Heart left ventricle (tissue), 16 donors: ENCODE measurements at regions of chr7 and their contacts with region 1.

Region 1: GRCh38 chr7:80593869-80594582 is 44.4 kb upstream of the CD36 start:
- DNase-seq: peak in 3 of 5 donors; percentile 48 to 69 (median 54)
- ATAC-seq: peak; percentile 66 to 88 (median 80)
- H3K4me3 ChIP-seq: peak overlapping the region in 1 of 12 donors; percentile 47
- H3K27ac ChIP-seq: peak overlapping the region; percentile 48 to 83 (median 69)
- H3K4me1 ChIP-seq: peaks cover 8 to 68% (median 32%) of the 10 kb centered on the region in 12 donors
- H3K27me3 ChIP-seq: no peaks in the 10 kb centered on the region
- CTCF ChIP-seq: no peak
- POLR2A ChIP-seq: peak in 1 of 2 donors; percentile 10

Region 2: DNA sequence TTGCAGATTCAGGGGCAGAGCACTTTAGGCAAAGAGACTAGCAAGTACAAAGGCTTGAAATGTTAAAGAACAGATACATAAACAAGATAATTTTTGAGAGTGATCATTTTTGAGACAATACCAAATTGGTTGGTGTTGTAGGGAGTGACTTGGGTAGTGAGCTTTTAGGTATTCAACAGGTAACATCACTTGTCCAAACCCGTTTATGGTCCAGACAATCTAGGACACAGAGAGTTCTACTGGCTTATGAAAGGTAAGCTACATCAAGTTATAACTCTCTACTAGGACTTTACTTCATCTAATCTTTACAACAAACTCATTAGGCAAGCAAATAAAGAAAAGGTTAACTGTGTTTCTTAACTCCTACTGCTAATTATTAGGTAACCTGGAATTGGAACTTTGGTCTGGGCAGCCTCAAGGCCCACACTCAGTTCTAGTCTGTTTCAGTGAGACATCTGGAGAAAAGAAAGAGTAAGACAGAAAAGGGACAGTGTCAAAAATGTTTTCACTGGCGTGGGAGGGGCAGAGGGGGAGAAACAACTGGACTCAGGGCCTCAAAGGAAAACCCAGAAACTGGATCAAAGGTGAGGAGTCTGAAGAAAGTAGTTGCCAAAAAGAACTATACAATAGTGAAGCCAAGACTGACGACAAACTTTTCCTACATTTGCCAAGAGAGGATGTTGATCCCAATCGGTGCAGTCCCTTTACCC is 121.4 kb before region 1 on chr7:
- intact Hi-C with region 1: loop called in 1 of 10 experiments (anchors 5 kb)
- DNase-seq: peak in 1 of 5 donors; percentile 13
- ATAC-seq: peak in 3 of 4 donors; percentile 40 to 57 (median 41)
- H3K4me3 ChIP-seq: no peak overlapping the region
- H3K27ac ChIP-seq: peak overlapping the region in 7 of 12 donors; percentile 2 to 56 (median 38)
- H3K4me1 ChIP-seq: peaks cover 4 to 36% (median 22%) of the 10 kb centered on the region in 12 donors
- H3K27me3 ChIP-seq: no peaks in the 10 kb centered on the region
- CTCF ChIP-seq: no peak
- POLR2A ChIP-seq: no peak

Region 3: DNA sequence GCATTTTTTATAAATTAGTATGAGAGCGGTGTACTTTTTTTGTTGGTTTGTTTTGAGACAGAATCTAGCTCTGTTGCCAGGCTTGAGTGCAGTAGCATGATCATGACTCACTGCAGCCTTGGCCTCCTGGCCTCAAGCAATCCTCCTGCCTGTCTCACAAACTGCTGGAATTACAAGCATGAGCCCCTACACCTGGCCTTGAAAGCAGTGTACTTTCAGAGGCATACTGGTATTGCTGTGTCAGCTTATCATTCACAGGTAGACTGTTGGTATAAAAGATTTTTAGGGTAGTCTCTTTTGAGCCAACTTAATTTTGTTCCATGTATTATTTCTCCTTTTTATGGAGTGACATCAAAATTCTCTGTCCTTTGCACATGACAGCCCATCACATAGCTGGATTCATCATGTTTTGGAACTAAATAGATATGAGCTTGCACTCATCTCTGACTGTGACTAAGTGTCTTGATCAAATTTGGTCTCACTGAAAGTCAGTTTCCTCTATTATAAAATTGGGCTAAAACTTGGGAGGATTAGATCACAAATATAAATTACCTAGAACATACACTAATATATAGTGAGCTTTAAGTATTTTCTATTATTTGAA is 94.6 kb before region 1 on chr7:
- intact Hi-C with region 1: loop called in 1 of 10 experiments (anchors 5 kb)
- DNase-seq: peak in 4 of 5 donors; percentile 36 to 72 (median 40)
- ATAC-seq: peak; percentile 80 to 93 (median 84)
- H3K4me3 ChIP-seq: no peak overlapping the region
- H3K27ac ChIP-seq: peak overlapping the region; percentile 18 to 83 (median 70)
- H3K4me1 ChIP-seq: peaks cover 3 to 42% (median 26%) of the 10 kb centered on the region in 12 donors
- H3K27me3 ChIP-seq: no peaks in the 10 kb centered on the region
- CTCF ChIP-seq: no peak
- POLR2A ChIP-seq: no peak

Region 4: DNA sequence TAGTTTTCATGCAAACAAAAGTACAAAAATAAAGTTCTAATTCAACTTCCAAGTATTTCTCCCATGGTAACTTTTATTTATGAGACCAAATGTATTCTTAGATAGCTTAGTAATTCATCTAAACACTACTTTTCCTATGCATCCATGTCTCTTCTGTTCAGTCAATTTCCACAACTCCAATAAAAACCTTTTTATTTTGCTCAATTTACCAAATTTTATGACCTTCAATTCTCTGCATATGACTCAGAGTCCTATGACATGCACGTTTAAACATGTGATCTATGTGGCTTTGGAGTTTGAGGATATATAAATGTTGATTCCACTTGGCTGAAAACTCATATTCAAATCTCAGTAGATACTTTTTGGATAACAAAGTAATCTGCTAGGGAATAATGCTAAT is 41.7 kb before region 1 on chr7:
- intact Hi-C with region 1: loop called in 2 of 10 experiments (anchors 5 kb)
- DNase-seq: no peak
- ATAC-seq: no peak
- H3K4me3 ChIP-seq: no peak overlapping the region
- H3K27ac ChIP-seq: peak overlapping the region in 8 of 12 donors; percentile 19 to 78 (median 50)
- H3K4me1 ChIP-seq: peaks cover 7 to 45% (median 31%) of the 10 kb centered on the region in 12 donors
- H3K27me3 ChIP-seq: no peaks in the 10 kb centered on the region
- CTCF ChIP-seq: no peak
- POLR2A ChIP-seq: no peak

Region 5: DNA sequence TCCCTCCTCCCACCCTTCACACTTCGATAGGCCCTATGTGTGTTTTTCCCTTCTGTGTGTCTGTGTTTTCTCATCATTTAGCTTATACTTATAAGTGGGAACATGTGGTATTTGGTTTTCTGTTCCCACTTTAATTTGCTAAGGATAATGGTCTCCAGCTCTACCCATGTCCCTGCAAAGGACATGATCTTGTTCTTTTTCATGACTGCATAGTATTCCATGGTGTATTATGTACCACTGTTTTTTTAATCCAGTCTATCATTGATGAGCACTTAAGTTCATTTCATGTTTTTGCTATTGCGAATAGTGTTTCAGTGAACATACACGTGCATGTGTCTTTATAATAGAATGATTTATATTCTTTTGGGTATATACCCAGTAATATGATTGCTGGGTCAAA is 35.9 kb before region 1 on chr7:
- intact Hi-C with region 1: loop called in 1 of 10 experiments (anchors 5 kb)
- DNase-seq: no peak
- ATAC-seq: no peak
- H3K4me3 ChIP-seq: no peak overlapping the region
- H3K27ac ChIP-seq: no peak overlapping the region
- H3K4me1 ChIP-seq: no peaks in the 10 kb centered on the region
- H3K27me3 ChIP-seq: no peaks in the 10 kb centered on the region
- CTCF ChIP-seq: no peak
- POLR2A ChIP-seq: no peak

Region 6: DNA sequence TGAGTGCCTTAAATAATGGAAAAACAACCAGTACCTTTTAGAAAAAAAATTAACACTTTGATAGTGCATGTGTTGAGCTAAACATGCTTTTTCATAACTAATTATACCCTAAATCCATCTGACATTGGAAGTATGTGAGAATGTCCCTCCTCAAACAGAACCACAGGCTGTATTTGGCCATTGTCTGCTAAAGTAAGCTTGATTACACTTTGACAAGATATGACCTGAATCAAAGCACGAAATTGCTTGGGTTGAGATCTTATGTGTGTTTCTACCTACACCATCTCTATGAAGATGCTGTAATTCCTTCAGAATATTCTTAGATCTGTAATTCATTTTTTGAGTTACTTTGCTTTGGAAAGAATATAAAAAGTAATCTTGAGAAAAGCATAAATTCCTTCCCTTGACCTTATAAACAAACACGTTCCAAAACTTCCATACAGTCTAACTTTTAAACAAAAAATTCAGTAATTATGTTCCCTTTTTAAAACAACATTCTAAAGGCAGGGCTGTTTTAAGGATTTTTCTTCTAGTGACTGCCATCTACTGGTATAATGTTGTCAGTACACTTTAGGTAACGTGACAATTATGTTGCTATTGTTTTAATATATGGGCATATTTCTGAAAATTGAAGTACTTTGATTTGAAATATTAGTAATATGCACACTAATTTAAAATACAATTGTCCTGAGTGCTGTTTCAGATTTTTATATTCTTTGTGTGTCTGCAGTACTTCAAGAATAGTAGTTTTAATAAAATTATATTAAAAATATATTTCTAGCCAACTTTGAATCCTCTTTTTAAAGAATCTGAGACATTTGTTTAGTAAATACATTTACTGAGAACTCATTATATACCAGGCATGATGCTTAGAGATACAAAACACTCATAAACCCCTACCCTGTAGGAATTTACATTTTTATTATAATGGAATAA is 65.4 kb after region 1 on chr7:
- intact Hi-C with region 1: loop called in 1 of 10 experiments (anchors 5 kb)
- DNase-seq: no peak
- ATAC-seq: peak in 2 of 4 donors; percentile 41 to 45
- H3K4me3 ChIP-seq: no peak overlapping the region
- H3K27ac ChIP-seq: peak overlapping the region; percentile 11 to 65 (median 42)
- H3K4me1 ChIP-seq: peaks cover 4 to 76% (median 50%) of the 10 kb centered on the region in 12 donors
- H3K27me3 ChIP-seq: no peaks in the 10 kb centered on the region
- CTCF ChIP-seq: peak; percentile 49 to 89 (median 68)
- POLR2A ChIP-seq: no peak

Region 7: DNA sequence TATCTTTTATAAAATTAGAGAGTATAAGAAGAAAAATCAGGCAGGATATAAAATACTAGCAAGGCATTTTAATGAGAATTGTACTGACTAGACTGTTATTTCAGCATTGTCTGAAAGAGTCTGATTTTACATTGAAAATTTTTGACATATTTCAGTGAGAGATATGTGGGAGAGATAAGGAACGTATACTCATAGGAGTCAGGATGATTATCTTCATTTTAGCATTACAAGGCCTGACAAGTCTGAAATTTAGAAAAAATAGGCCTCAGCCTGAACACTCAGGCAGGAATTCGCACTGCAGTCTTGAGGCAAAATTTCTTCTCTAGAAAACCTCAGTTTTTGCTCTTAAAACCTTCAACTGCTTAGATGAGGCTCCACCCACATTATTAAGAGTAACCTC is 789.8 kb after region 1 on chr7:
- intact Hi-C with region 1: no loop called
- DNase-seq: no peak
- ATAC-seq: no peak
- H3K4me3 ChIP-seq: no peak overlapping the region
- H3K27ac ChIP-seq: no peak overlapping the region
- H3K4me1 ChIP-seq: no peaks in the 10 kb centered on the region
- H3K27me3 ChIP-seq: no peaks in the 10 kb centered on the region
- CTCF ChIP-seq: no peak
- POLR2A ChIP-seq: no peak